A549 (cell line): ENCODE measurements at regions of chr17 and their contacts with region 1.

Region 1: GRCh38 chr17:42527273-42527703 is 8.8 kb upstream of the NAGLU start:
- DNase-seq: peak; percentile 79 to 91
- ATAC-seq: peak; percentile 85 to 92
- H3K4me3 ChIP-seq: no peak overlapping the region
- H3K27ac ChIP-seq: peak overlapping the region; percentile 50 to 80; a peak in 5 of 6 replicates
- H3K4me1 ChIP-seq: peaks cover 50% of the 10 kb centered on the region
- CTCF ChIP-seq: peak; percentile 98
- EP300 ChIP-seq: no peak
- POLR2A ChIP-seq: no peak
- RAD21 ChIP-seq: peak; percentile 99 to 100

Region 2: GRCh38 chr17:42322382-42323267 is 204.7 kb before region 1 on chr17:
- CTCF ChIA-PET with region 1: interaction called, 118 read pairs
- POLR2A ChIA-PET with region 1: no interaction called
- DNase-seq: peak; percentile 97 to 98
- ATAC-seq: peak; percentile 83 to 87
- H3K4me3 ChIP-seq: no peak overlapping the region
- H3K27ac ChIP-seq: peak overlapping the region; percentile 59 to 89
- H3K4me1 ChIP-seq: peaks cover 51% of the 10 kb centered on the region
- CTCF ChIP-seq: peak; percentile 100
- EP300 ChIP-seq: no peak
- POLR2A ChIP-seq: no peak
- RAD21 ChIP-seq: peak; percentile 100

Region 3: GRCh38 chr17:42405963-42406495 is 121.3 kb before region 1 on chr17:
- CTCF ChIA-PET with region 1: interaction called, 38 read pairs
- POLR2A ChIA-PET with region 1: no interaction called
- DNase-seq: peak; percentile 82 to 90
- ATAC-seq: peak; percentile 56 to 67
- H3K4me3 ChIP-seq: no peak overlapping the region
- H3K27ac ChIP-seq: peak overlapping the region in 1 of 2 experiments; percentile 84; a peak in 3 of 6 replicates
- H3K4me1 ChIP-seq: peaks cover 73% of the 10 kb centered on the region
- CTCF ChIP-seq: peak; percentile 97
- EP300 ChIP-seq: no peak
- POLR2A ChIP-seq: no peak
- RAD21 ChIP-seq: peak; percentile 98 to 99

Region 4: GRCh38 chr17:42422958-42423712 is 104.2 kb before region 1 on chr17 and contains the start of gene CAVIN1:
- CTCF ChIA-PET with region 1: interaction called, 213 read pairs
- POLR2A ChIA-PET with region 1: interaction called, 5 read pairs
- DNase-seq: peak; percentile 97 to 99
- ATAC-seq: peak; percentile 71 to 86
- H3K4me3 ChIP-seq: peak within 1 kb of the TSS; percentile 93
- H3K27ac ChIP-seq: peak within 1 kb of the TSS; percentile 93 to 95
- H3K4me1 ChIP-seq: peaks cover 45% of the 10 kb centered on the region
- CTCF ChIP-seq: no peak
- EP300 ChIP-seq: no peak
- POLR2A ChIP-seq: peak; percentile 99
- RAD21 ChIP-seq: peak in 1 of 2 experiments; percentile 18; a peak in 1 of 5 replicates
- polyA plus RNA-seq, gene CAVIN1: 91.4 and 101 TPM in 2 replicates

Region 5: GRCh38 chr17:42438600-42439567 is 88.4 kb before region 1 on chr17:
- CTCF ChIA-PET with region 1: interaction called, 213 read pairs
- POLR2A ChIA-PET with region 1: no interaction called
- DNase-seq: no peak
- ATAC-seq: peak in 1 of 2 experiments; percentile 77; a peak in 3 of 6 replicates
- H3K4me3 ChIP-seq: no peak overlapping the region
- H3K27ac ChIP-seq: no peak overlapping the region
- H3K4me1 ChIP-seq: peaks cover 15% of the 10 kb centered on the region
- CTCF ChIP-seq: peak; percentile 45
- EP300 ChIP-seq: no peak
- POLR2A ChIP-seq: no peak
- RAD21 ChIP-seq: peak; percentile 37 to 55; a peak in 4 of 5 replicates

Region 6: DNA sequence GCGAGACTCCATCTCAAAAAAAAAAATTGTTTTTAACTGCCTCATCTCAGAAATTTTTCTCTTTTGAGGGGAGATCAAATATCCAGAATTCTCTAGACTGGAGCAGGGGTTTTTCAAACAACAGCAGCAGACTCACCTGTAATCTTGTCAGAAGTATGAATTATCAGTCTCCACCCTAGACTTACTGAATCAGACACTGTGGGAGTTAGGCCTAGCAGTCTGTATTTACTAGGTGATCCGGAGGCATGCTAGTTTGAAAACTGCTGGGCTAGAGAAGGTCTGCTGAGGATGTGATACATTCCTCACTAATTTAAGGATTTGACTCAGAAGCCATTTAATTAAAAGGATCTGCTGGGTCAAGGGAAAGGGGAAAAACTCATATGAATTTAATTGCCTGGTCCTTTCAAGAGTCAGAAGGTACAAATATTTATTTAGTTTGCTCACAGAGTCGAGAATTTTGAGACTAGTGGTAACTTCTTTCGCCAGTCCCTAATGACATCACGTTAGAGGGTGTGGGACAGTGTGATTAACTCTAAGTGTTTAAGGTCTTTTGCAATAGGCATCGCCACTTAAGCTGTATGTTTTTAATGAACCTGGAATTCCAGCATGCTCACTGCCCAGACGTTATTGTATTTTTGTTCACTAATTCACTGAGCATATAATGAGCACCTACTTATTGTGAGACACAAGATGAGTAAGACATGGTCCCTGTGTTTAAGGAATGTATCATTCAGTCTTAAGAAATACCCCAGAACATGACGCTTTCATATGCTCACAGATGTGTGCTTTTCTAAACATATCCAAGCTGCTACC is 54.4 kb before region 1 on chr17:
- CTCF ChIA-PET with region 1: interaction called, 19 read pairs
- POLR2A ChIA-PET with region 1: no interaction called
- DNase-seq: peak in 1 of 2 experiments; percentile 45
- ATAC-seq: peak; percentile 85 to 95
- H3K4me3 ChIP-seq: no peak overlapping the region
- H3K27ac ChIP-seq: peak overlapping the region; percentile 34 to 44
- H3K4me1 ChIP-seq: peaks cover 36% of the 10 kb centered on the region
- CTCF ChIP-seq: no peak
- EP300 ChIP-seq: no peak
- POLR2A ChIP-seq: no peak
- RAD21 ChIP-seq: no peak

Region 7: DNA sequence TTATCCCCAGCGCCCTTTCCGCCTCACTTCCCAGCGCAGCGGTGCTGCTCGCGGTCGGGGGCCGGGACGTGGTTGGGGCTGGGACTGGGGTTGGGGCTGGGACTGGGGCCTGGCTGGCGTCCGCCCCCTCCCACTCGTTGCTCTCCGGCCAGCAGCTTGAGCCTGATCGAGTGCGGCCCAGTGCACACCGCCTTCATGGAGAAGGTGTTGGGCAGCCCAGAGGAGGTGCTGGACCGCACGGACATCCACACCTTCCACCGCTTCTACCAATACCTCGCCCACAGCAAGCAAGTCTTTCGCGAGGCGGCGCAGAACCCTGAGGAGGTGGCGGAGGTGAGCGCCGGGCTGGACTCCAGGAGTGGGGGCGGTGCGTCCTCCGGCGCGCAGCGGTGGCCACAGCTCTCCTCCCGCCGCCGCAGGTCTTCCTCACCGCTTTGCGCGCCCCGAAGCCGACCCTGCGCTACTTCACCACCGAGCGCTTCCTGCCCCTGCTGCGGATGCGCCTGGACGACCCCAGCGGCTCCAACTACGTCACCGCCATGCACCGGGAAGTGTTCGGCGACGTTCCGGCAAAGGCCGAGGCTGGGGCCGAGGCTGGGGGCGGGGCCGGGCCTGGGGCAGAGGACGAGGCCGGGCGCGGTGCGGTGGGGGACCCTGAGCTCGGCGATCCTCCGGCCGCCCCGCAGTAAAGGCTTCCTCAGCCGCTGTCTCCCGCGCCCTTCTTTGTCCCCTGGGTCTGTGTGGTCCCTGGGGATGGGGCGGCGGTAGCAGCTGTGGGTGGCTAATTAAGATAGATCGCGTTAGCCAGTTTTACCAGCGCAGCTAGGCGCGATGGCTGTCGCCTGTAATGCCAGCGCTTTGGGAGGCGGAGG is 27.2 kb after region 1 on chr17:
- CTCF ChIA-PET with region 1: interaction called, 13 read pairs
- POLR2A ChIA-PET with region 1: no interaction called
- DNase-seq: peak; percentile 82 to 88
- ATAC-seq: peak; percentile 81 to 89
- H3K4me3 ChIP-seq: peak overlapping the region; percentile 87
- H3K27ac ChIP-seq: peak overlapping the region; percentile 94
- H3K4me1 ChIP-seq: peaks cover 17% of the 10 kb centered on the region
- CTCF ChIP-seq: no peak
- EP300 ChIP-seq: no peak
- POLR2A ChIP-seq: peak; percentile 88
- RAD21 ChIP-seq: no peak

Region 8: DNA sequence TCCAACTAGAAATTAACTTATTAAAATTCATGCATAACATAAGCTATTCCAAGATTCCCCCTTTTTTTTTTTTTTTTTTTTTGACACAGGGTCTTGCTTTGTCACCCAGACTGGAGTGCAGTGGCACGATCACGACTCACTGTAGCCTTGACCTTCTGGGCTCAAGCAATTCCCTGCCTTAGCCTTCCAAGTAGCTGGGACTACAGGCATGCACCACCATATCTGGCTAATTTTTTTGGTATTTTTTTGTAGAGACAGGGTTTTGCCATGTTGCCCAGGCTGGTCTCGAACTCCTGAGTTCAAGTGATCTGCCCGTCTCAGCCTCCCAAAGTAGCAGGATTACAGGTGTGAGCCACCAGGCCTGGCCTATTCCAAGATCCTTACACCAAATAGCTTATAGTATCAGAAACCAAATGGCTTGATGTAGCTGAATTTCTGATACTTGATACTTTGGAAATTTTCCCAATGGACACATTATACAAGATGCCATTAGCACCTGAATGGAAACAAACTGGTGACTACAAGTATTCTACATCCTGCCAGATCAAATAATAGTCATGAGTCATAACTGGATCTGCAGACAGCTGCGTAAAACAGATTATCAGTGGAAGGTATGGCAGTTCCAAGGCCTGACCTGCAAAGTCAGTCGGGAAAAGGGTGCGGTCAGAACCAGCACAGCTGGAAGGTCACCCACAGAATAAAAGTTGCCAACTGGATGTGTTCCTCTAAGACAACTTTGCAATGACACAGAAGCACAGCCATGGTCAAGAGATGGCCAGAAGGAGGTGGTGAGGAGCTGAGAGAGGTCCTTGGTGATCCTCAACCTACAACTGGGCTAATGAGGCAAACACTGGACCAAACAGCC is 96.7 kb after region 1 on chr17:
- CTCF ChIA-PET with region 1: no interaction called
- POLR2A ChIA-PET with region 1: no interaction called
- DNase-seq: peak; percentile 80 to 86
- ATAC-seq: peak; percentile 85 to 90
- H3K4me3 ChIP-seq: no peak overlapping the region
- H3K27ac ChIP-seq: peak overlapping the region; percentile 52 to 70; a peak in 5 of 6 replicates
- H3K4me1 ChIP-seq: peaks cover 15% of the 10 kb centered on the region
- CTCF ChIP-seq: peak; percentile 29; the same call in 2 of the 3 replicates
- EP300 ChIP-seq: no peak
- POLR2A ChIP-seq: no peak
- RAD21 ChIP-seq: peak in 1 of 2 experiments; percentile 12; a peak in 2 of 5 replicates